Activated CD4-positive, alpha-beta T cell treated with anti-CD3 and anti-CD28 coated beads, Interleukin-2, amount 10 ng/mL, durations not matched to agents 24 days and 14 days (primary cell): ENCODE measurements at regions of chr4 and their contacts with region 1.

Region 1: DNA sequence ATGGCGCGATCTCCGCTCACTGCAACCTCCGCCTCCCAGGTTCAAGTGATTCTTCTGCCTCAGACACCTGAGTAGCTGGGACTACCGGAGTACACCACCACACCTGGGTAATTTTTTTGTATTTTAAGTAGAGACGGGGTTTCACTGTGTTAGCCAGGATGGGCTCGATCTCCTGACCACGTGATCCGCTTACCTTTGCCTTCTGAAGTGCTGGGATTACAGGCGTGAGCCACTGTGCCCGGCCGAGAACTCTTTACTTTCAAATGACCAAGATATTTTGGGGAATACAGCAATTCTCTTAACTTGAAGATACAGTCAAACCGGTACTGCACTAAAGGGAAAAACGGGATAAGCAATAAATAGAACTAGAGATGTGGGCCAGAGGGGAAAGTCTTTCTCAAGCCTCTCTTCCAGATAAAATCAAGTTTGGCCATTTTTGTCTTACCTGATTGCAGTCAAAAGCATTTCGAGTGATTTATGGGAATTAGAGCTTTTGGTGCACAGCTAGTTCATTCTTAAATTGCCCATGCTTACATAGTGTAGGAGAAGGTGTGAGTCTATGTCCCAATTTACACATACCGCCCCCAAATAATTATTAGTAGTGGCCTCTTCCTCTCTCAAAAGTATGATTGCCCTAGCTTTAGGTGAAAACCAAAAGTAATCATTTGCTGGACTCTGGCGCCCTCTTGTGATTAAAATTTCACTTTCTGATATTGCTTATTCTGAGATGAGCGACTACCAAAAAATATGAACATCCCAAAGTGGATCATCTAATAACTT is 53.2 kb upstream of the ABCG2 start:
- DNase-seq: peak; percentile 89
- H3K4me3 Mint-ChIP-seq: no peak overlapping the region
- H3K27ac Mint-ChIP-seq: no peak overlapping the region
- H3K4me1 Mint-ChIP-seq: peaks cover 5% of the 10 kb centered on the region
- H3K27me3 Mint-ChIP-seq: peaks cover 13% of the 10 kb centered on the region

Region 2: GRCh38 chr4:87589522-87589921 is 622.1 kb before region 1 on chr4:
- intact Hi-C with region 1: no loop called
- DNase-seq: no peak
- H3K4me3 Mint-ChIP-seq: no peak overlapping the region
- H3K27ac Mint-ChIP-seq: no peak overlapping the region
- H3K4me1 Mint-ChIP-seq: no peaks in the 10 kb centered on the region
- H3K27me3 Mint-ChIP-seq: peaks cover 6% of the 10 kb centered on the region

Region 3: DNA sequence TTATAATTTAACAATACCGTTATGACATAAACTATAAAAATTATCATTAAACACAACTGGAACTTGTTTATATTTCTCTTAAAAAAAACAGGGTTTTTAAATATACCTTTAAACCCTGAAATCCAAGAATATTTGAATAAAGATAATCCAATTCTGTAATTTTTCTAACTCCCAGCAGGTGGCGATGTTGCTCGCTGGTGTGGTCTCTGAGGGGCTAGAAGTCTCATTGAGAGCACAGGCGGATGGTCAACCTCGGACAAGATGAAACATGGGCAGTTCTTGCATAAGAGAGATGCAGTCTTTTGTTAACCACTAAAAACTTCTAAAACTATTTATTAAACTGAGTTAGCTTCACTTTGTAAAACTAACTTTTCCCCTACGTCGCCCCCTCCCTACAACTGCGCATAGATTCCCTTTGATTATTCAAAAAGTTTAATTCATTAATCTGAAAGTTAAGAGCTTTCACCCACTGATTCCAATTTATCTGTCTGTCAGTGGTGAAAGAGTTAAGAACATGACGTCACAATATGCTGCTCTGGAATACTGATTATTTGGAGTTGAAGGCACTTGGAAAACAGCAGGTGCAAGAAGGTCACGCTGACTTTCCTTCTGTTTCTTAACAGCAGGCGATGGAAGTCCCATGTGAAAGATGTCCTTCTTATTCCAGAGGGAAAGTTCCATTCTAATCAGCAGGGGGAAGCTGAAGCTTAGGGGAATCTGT is 532.1 kb before region 1 on chr4:
- intact Hi-C with region 1: loop called (anchors 2 kb)
- DNase-seq: peak; percentile 64
- H3K4me3 Mint-ChIP-seq: no peak overlapping the region
- H3K27ac Mint-ChIP-seq: no peak overlapping the region
- H3K4me1 Mint-ChIP-seq: no peaks in the 10 kb centered on the region
- H3K27me3 Mint-ChIP-seq: no peaks in the 10 kb centered on the region

Region 4: GRCh38 chr4:87973283-87974169 is 238.1 kb before region 1 on chr4:
- intact Hi-C with region 1: loop called (anchors 1 kb)
- DNase-seq: peak; percentile 77
- H3K4me3 Mint-ChIP-seq: no peak overlapping the region
- H3K27ac Mint-ChIP-seq: no peak overlapping the region
- H3K4me1 Mint-ChIP-seq: peaks cover 4% of the 10 kb centered on the region
- H3K27me3 Mint-ChIP-seq: peaks cover 49% of the 10 kb centered on the region

Region 5: DNA sequence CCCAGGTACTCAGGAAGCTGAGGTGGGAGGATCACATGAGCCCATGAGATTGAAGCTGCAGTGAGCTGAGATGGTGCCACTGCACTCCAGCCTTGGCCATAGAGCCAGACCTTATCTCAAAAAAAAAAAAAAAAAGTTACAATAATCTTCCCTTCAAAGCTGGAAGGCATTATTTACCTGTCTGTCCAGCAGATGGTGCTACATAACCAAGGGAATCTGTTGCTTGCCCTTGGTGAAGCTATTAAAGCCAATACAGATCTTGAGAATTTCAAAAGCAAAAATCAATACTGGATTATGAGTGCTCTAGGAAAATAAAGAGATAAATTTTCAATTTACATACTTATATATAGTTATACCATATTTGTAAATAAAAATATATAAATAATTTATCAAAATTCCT is 178.4 kb before region 1 on chr4:
- intact Hi-C with region 1: loop called (anchors 1 kb)
- DNase-seq: peak; percentile 84
- H3K4me3 Mint-ChIP-seq: no peak overlapping the region
- H3K27ac Mint-ChIP-seq: no peak overlapping the region
- H3K4me1 Mint-ChIP-seq: peaks cover 5% of the 10 kb centered on the region
- H3K27me3 Mint-ChIP-seq: no peaks in the 10 kb centered on the region

Region 6: DNA sequence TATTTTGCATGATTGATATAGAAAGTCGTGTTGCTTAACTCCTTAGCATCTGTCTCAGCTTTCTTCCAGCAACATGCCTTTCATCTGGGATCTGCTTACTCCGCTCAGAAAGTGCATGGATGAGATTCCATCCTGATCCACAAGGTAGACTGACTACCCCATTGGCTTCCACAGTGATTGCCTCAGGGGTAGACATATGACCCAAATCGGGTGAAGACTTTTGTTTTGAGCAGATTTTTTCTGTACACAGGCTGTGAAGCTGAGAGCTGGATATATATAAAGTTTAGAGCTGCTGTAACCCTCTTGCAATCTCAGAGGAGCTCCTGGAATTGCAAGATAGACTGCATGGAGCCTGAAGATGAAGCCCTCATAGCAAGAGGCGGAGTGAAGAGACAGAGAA is 158.3 kb after region 1 on chr4:
- intact Hi-C with region 1: loop called (anchors 5 kb)
- DNase-seq: no peak
- H3K4me3 Mint-ChIP-seq: no peak overlapping the region
- H3K27ac Mint-ChIP-seq: no peak overlapping the region
- H3K4me1 Mint-ChIP-seq: peaks cover 9% of the 10 kb centered on the region
- H3K27me3 Mint-ChIP-seq: no peaks in the 10 kb centered on the region